ENCODE measurements at regions of chr5 and their contacts with region 1.

Region 1: DNA sequence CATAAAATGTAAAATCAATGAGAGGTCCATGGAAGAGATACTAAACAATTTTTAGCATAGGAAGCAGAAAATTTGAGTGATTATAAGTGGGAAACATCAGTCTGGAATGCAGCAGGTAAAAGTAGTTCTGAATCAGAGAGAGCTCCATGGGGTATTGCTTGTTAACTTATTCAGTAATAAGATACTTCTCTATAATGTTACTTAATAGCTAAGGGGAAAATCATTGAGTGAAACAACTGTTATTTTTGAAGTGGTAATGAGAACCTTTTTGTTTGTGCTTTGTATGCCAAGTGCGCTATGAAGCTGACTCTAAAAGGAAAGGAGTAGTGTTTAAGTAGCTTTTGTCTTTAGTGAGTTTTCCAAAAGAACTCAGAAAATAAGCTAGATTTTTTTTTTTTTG is 95.2 kb downstream of the ERBIN start:
- DNase-seq: no peak
- H3K4me3 ChIP-seq: no peak overlapping the region
- H3K4me3 Mint-ChIP-seq: no peak overlapping the region
- H3K27ac ChIP-seq: no peak overlapping the region
- H3K27ac Mint-ChIP-seq: peak overlapping the region in 1 of 7 donors; percentile 28
- H3K4me1 ChIP-seq: peaks cover 11% of the 10 kb centered on the region
- H3K4me1 Mint-ChIP-seq: peaks cover 9 to 26% (median 24%) of the 10 kb centered on the region in 4 donors
- H3K27me3 ChIP-seq: no peaks in the 10 kb centered on the region
- H3K27me3 Mint-ChIP-seq: no peaks in the 10 kb centered on the region

Region 2: GRCh38 chr5:65760504-65761275 is 260.9 kb before region 1 on chr5:
- CTCF ChIA-PET with region 1: no interaction called
- POLR2A ChIA-PET with region 1: no interaction called
- intact Hi-C with region 1: loop called (anchors 5 kb)
- DNase-seq: peak; percentile 63 to 74 (median 68)
- H3K4me3 ChIP-seq: no peak overlapping the region
- H3K4me3 Mint-ChIP-seq: no peak overlapping the region
- H3K27ac ChIP-seq: no peak overlapping the region
- H3K27ac Mint-ChIP-seq: peak overlapping the region in 3 of 7 donors; percentile 1 to 53 (median 24)
- H3K4me1 ChIP-seq: peaks cover 5% of the 10 kb centered on the region
- H3K4me1 Mint-ChIP-seq: peaks cover 3 to 12% (median 6%) of the 10 kb centered on the region in 4 donors
- H3K27me3 ChIP-seq: no peaks in the 10 kb centered on the region
- H3K27me3 Mint-ChIP-seq: no peaks in the 10 kb centered on the region

Region 3: DNA sequence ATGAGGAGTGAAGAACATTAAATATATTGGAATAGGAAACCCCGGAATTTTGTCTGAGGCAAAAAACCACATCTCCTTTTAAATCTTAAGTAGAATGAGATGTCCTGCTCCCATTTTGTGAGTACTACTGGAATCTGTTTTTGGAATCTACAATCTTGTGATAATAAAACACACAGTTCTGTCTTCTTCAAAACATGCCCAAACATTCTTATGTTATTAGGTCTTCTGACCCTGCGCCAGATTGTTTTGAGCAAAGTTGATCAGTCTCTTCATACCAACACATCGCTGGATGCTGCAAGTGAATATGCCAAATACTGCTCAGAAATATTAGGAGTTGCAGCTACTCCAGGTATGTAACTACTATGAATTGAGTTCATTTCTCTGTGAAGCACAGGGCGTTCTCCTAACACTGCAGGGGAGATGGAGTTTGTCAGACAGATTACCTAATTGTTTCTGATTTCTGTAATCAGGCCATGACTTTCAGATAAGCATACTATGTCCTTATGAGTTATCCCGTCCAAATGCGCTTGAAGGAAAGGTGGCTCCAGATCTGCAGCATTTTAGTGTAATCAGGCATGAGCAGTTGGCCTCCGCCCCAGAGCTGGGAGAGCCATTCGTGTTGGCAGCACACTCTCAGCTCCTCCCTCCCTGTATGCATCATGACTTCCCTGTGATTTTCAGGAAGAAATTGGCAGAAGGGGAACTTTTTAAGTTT is 211.6 kb before region 1 on chr5:
- CTCF ChIA-PET with region 1: no interaction called
- POLR2A ChIA-PET with region 1: no interaction called
- intact Hi-C with region 1: no loop called
- DNase-seq: no peak
- H3K4me3 ChIP-seq: no peak overlapping the region
- H3K4me3 Mint-ChIP-seq: no peak overlapping the region
- H3K27ac ChIP-seq: no peak overlapping the region
- H3K27ac Mint-ChIP-seq: no peak overlapping the region
- H3K4me1 ChIP-seq: peaks cover 11% of the 10 kb centered on the region
- H3K4me1 Mint-ChIP-seq: peaks cover 6 to 15% (median 12%) of the 10 kb centered on the region in 4 donors
- H3K27me3 ChIP-seq: no peaks in the 10 kb centered on the region
- H3K27me3 Mint-ChIP-seq: no peaks in the 10 kb centered on the region

Region 4: DNA sequence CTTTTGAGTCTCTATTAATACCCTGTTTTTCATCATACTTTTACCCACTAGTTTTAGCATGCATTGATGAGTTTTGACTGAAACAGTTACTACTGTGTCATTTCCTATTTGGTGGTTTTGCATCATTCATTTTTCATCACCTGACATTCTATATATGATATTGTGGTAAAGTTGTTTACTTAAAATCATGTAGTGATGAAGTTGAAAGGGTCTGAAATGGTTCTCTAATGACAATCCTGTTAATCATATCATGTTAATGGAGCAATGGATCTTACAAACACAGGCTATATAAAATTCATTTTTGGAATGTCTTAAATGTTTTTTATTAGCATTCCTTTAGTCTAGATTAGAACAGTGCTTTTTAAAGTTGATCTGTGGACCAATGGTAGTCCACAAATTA is 11.1 kb before region 1 on chr5:
- CTCF ChIA-PET with region 1: no interaction called
- POLR2A ChIA-PET with region 1: interaction called, 4 read pairs
- intact Hi-C with region 1: loop called (anchors 2 kb)
- DNase-seq: peak in 4 of 5 donors; percentile 17 to 44 (median 32)
- H3K4me3 ChIP-seq: no peak overlapping the region
- H3K4me3 Mint-ChIP-seq: peak overlapping the region in 4 of 8 donors; percentile 7 to 70 (median 40)
- H3K27ac ChIP-seq: no peak overlapping the region
- H3K27ac Mint-ChIP-seq: peak overlapping the region; percentile 75 to 89 (median 86)
- H3K4me1 ChIP-seq: peaks cover 38% of the 10 kb centered on the region
- H3K4me1 Mint-ChIP-seq: peaks cover 19 to 54% (median 45%) of the 10 kb centered on the region in 4 donors
- H3K27me3 ChIP-seq: no peaks in the 10 kb centered on the region
- H3K27me3 Mint-ChIP-seq: no peaks in the 10 kb centered on the region

Region 5: GRCh38 chr5:66609615-66610014 is 588.0 kb after region 1 on chr5:
- CTCF ChIA-PET with region 1: no interaction called
- POLR2A ChIA-PET with region 1: no interaction called
- intact Hi-C with region 1: no loop called
- DNase-seq: no peak
- H3K4me3 ChIP-seq: no peak overlapping the region
- H3K4me3 Mint-ChIP-seq: no peak overlapping the region
- H3K27ac ChIP-seq: no peak overlapping the region
- H3K27ac Mint-ChIP-seq: no peak overlapping the region
- H3K4me1 ChIP-seq: no peaks in the 10 kb centered on the region
- H3K4me1 Mint-ChIP-seq: no peaks in the 10 kb centered on the region
- H3K27me3 ChIP-seq: no peaks in the 10 kb centered on the region
- H3K27me3 Mint-ChIP-seq: peaks cover 3 to 12% of the 10 kb centered on the region in 2 donors